MCF 10A (cell line): ENCODE measurements at regions of chr12 and their contacts with region 1.

Region 1: DNA sequence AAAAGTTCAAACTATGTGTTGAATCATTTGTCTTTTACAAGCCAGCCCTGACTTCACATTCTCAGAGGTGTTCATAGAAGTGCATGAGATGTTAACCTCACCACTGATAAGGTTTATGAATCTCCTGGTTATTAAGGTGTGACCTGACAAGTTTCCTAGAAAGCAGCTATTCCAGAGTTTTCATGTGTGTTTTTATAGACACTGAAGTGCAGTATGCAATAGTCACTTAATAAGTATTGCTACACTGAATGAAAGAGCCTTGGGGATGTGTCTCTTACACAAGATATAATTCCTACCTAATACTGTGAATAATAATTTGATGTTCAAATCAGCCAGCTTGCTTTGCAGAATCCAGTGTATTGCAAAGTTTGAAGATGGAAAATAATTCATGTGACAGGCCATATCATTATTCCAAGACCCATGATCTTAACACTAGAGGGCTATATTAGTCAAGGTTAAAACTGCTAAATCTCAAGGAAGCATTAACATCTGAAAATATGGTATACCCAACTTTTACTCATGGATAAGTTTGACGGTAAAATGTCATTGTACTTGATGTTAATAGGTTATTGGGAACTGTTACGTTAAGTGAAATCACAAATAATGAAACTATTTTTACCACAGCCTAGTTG is 13.0 kb downstream of the SLC25A3 start:
- DNase-seq: peak; percentile 14
- H3K4me3 Mint-ChIP-seq: no peak overlapping the region
- H3K27ac Mint-ChIP-seq: no peak overlapping the region
- H3K4me1 Mint-ChIP-seq: no peaks in the 10 kb centered on the region
- H3K27me3 Mint-ChIP-seq: no peaks in the 10 kb centered on the region
- CTCF ChIP-seq: peak; percentile 10

Region 2: DNA sequence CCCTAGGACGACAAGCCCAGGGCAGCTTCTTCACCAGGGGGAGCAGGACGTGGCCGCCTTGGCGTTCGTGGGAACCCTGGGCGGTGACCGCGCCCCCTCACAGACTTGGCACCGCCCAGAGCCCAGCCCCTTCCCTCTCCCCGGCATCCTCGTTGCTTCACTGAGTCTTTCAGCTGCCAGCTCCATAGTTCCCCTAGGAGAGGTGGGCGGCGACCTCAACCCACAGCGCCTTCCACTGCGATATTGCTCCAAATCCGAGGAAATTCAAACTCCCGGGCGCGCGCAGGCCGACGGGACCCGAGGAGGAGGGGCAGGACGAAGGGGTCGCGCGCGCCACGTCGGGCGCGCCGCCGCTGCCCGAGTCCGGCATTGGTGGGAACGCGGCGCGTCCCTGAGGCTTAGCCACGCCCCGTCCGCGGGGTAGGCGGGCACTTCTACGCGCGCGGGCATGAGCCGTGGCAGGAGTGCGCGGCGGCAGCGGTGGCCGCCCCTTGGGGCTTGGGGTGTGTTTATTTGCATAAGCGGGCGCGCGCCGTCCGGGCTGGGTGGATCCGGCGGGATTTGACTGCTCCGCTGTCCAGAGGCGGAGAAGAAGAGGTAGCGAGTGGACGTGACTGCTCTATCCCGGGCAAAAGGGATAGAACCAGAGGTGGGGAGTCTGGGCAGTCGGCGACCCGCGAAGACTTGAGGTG is 38.4 kb after region 1 on chr12 and contains the starts of genes APAF1 and IKBIP:
- CTCF ChIA-PET with region 1: interaction called, 20 read pairs
- POLR2A ChIA-PET with region 1: interaction called, 9 read pairs
- intact Hi-C with region 1: loop called (anchors 1 kb)
- DNase-seq: peak; percentile 97
- H3K4me3 Mint-ChIP-seq: peak within 1 kb of the TSS; percentile 93
- H3K27ac Mint-ChIP-seq: peak within 1 kb of the TSS; percentile 93
- H3K4me1 Mint-ChIP-seq: peaks cover 7% of the 10 kb centered on the region
- H3K27me3 Mint-ChIP-seq: no peaks in the 10 kb centered on the region
- CTCF ChIP-seq: no peak
- total RNA-seq, gene APAF1: 5.9 and 9.1 TPM in 2 replicates
- total RNA-seq, gene IKBIP: 29.2 and 43.0 TPM in 2 replicates

Region 3: DNA sequence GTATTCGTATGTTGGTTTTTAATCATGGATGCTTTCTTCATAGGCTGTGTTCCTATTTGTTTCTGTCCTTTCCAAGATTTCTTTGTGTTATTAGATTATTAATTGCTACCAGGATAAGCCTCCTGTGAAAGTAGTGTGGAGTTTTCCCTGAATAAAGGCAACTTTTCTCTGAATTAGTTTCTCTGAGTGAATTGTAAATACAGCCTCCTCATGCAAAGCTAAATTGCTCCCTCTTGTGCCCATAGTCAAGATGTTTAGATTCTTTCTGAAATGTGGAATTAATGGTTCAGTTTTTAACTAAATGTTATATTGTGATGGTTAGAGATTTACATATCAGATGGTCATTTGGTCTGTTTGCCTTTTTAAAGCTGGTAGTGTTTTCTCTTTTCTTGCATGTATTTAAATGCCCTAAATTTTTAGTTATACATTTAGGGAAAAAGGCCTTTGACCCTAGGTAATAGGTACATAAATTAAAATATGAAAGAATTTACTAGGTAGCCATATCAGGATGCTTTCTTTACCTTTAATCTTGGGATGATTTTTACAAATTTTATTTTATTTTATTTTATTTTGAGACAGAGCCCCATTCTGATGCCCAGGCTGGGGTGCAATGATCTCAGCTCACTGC is 47.5 kb after region 1 on chr12:
- CTCF ChIA-PET with region 1: interaction called, 20 read pairs
- POLR2A ChIA-PET with region 1: no interaction called
- intact Hi-C with region 1: loop called (anchors 1 kb)
- DNase-seq: peak; percentile 73
- H3K4me3 Mint-ChIP-seq: no peak overlapping the region
- H3K27ac Mint-ChIP-seq: no peak overlapping the region
- H3K4me1 Mint-ChIP-seq: peaks cover 8% of the 10 kb centered on the region
- H3K27me3 Mint-ChIP-seq: no peaks in the 10 kb centered on the region
- CTCF ChIP-seq: peak; percentile 79